ENCODE measurements at regions of chr5 and their contacts with region 1.

Region 1: GRCh38 chr5:134041570-134042411 is 37.0 kb upstream of the VDAC1 start:
- DNase-seq: no peak
- ATAC-seq: no peak
- H3K4me3 ChIP-seq: no peak overlapping the region
- H3K4me3 Mint-ChIP-seq: no peak overlapping the region
- H3K27ac ChIP-seq: no peak overlapping the region
- H3K27ac Mint-ChIP-seq: no peak overlapping the region
- H3K4me1 ChIP-seq: peaks cover 0 to 3% of the 10 kb centered on the region in 2 donors
- H3K4me1 Mint-ChIP-seq: peaks cover 1% of the 10 kb centered on the region
- H3K27me3 ChIP-seq: no peaks in the 10 kb centered on the region
- H3K27me3 Mint-ChIP-seq: no peaks in the 10 kb centered on the region
- CTCF ChIP-seq: no peak

Region 2: GRCh38 chr5:133111299-133111698 is 930.5 kb before region 1 on chr5:
- CTCF ChIA-PET with region 1: interaction called, 9 read pairs
- POLR2A ChIA-PET with region 1: no interaction called
- intact Hi-C with region 1: loop called (anchors 1 kb)
- DNase-seq: peak; percentile 88
- ATAC-seq: peak; percentile 60
- H3K4me3 ChIP-seq: no peak overlapping the region
- H3K4me3 Mint-ChIP-seq: no peak overlapping the region
- H3K27ac ChIP-seq: no peak overlapping the region
- H3K27ac Mint-ChIP-seq: peak overlapping the region; percentile 0
- H3K4me1 ChIP-seq: peaks cover 37 to 39% of the 10 kb centered on the region in 2 donors
- H3K4me1 Mint-ChIP-seq: peaks cover 59% of the 10 kb centered on the region
- H3K27me3 ChIP-seq: no peaks in the 10 kb centered on the region
- H3K27me3 Mint-ChIP-seq: no peaks in the 10 kb centered on the region
- CTCF ChIP-seq: peak; percentile 97

Region 3: DNA sequence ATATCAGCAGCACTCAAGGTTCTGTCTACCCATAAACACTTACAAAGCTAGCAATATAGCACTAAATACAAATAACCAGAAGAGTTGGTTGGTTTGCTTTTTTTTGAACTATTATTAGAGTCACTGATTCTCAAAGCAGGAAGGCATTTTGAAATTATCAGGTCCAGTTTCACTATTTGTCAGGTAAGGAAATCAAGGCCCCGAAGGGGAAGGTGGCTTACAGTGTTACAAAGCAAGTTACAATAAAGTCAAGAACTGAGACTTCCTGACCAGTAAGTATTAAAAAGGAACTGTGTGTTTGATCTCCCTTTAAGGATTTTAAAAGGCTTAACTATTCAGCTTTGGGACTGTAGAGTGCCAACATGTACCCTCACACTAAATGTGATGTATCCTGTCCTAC is 84.2 kb before region 1 on chr5:
- CTCF ChIA-PET with region 1: no interaction called
- POLR2A ChIA-PET with region 1: no interaction called
- intact Hi-C with region 1: no loop called
- DNase-seq: peak; percentile 65
- ATAC-seq: peak; percentile 59
- H3K4me3 ChIP-seq: peak overlapping the region in 1 of 5 experiments; percentile 38
- H3K4me3 Mint-ChIP-seq: peak overlapping the region; percentile 74
- H3K27ac ChIP-seq: peak overlapping the region; percentile 82
- H3K27ac Mint-ChIP-seq: peak overlapping the region; percentile 84
- H3K4me1 ChIP-seq: peaks cover 17 to 28% of the 10 kb centered on the region in 2 donors
- H3K4me1 Mint-ChIP-seq: peaks cover 37% of the 10 kb centered on the region
- H3K27me3 ChIP-seq: no peaks in the 10 kb centered on the region
- H3K27me3 Mint-ChIP-seq: no peaks in the 10 kb centered on the region
- CTCF ChIP-seq: no peak

Region 4: DNA sequence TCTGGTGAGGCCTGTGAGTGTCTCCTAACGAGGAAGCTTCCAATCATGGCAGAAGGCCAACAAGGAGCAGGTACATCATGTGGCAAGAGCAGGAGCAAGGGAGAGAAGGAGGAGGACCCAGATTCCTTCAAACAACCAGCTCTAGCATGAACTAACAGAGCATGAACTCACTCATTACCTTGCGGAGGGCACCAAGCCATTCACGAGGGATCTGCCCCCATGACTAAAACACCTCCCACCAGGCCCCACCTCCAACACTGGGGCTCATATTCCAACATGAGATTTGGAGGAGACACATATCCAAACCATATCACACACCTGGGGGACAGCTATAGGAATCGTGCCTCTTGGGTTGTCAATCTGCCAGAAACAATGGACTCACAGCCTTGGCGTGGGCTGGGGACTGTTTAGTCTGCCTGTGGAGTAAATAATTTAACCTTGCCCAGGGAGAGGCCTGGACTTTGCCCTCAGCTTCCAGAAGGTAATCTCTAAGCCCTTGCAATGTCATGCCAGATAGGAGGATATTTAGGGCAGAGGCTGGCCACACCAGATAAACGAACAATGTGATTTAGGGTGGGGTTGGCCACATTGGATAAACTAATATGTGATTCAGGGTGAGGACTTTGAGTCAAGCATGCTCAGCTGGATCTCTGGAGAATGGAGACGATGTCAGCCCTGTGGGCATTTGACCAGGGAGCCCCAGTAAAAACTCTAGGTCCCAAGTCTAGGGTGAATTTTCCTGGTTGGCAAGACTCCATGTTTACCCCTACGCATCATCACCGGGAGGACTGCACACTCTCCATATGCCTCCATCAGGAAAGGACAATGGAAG is 23.4 kb before region 1 on chr5:
- CTCF ChIA-PET with region 1: interaction called, 12 read pairs
- POLR2A ChIA-PET with region 1: no interaction called
- intact Hi-C with region 1: no loop called
- DNase-seq: no peak
- ATAC-seq: no peak
- H3K4me3 ChIP-seq: no peak overlapping the region
- H3K4me3 Mint-ChIP-seq: no peak overlapping the region
- H3K27ac ChIP-seq: no peak overlapping the region
- H3K27ac Mint-ChIP-seq: no peak overlapping the region
- H3K4me1 ChIP-seq: no peaks in the 10 kb centered on the region
- H3K4me1 Mint-ChIP-seq: no peaks in the 10 kb centered on the region
- H3K27me3 ChIP-seq: no peaks in the 10 kb centered on the region
- H3K27me3 Mint-ChIP-seq: peaks cover under 1% of the 10 kb centered on the region
- CTCF ChIP-seq: no peak

Region 5: GRCh38 chr5:134059758-134060495 is 18.1 kb after region 1 on chr5:
- CTCF ChIA-PET with region 1: interaction called, 12 read pairs
- POLR2A ChIA-PET with region 1: interaction called, 3 read pairs
- intact Hi-C with region 1: no loop called
- DNase-seq: no peak
- ATAC-seq: no peak
- H3K4me3 ChIP-seq: no peak overlapping the region
- H3K4me3 Mint-ChIP-seq: no peak overlapping the region
- H3K27ac ChIP-seq: no peak overlapping the region
- H3K27ac Mint-ChIP-seq: no peak overlapping the region
- H3K4me1 ChIP-seq: no peaks in the 10 kb centered on the region
- H3K4me1 Mint-ChIP-seq: no peaks in the 10 kb centered on the region
- H3K27me3 ChIP-seq: no peaks in the 10 kb centered on the region
- H3K27me3 Mint-ChIP-seq: no peaks in the 10 kb centered on the region
- CTCF ChIP-seq: no peak

Region 6: GRCh38 chr5:134113902-134114875 is 72.4 kb after region 1 on chr5 and contains the start of gene TCF7:
- CTCF ChIA-PET with region 1: interaction called, 27 read pairs
- POLR2A ChIA-PET with region 1: no interaction called
- intact Hi-C with region 1: no loop called
- DNase-seq: peak; percentile 86
- ATAC-seq: peak; percentile 89
- H3K4me3 ChIP-seq: peak within 1 kb of the TSS; percentile 64 to 84 (median 82)
- H3K4me3 Mint-ChIP-seq: peak within 1 kb of the TSS; percentile 90
- H3K27ac ChIP-seq: peak within 1 kb of the TSS in 1 of 2 donors; percentile 36
- H3K27ac Mint-ChIP-seq: peak within 1 kb of the TSS; percentile 78
- H3K4me1 ChIP-seq: peaks cover 13 to 32% of the 10 kb centered on the region in 2 donors
- H3K4me1 Mint-ChIP-seq: peaks cover 19% of the 10 kb centered on the region
- H3K27me3 ChIP-seq: peaks cover 0 to 38% (median 16%) of the 10 kb centered on the region in 4 experiments
- H3K27me3 Mint-ChIP-seq: peaks cover 14% of the 10 kb centered on the region
- CTCF ChIP-seq: no peak
- total RNA-seq, gene TCF7: 58.8 and 61.1 TPM in 2 replicates

Region 7: GRCh38 chr5:134145779-134146581 is 104.2 kb after region 1 on chr5:
- CTCF ChIA-PET with region 1: interaction called, 644 read pairs
- POLR2A ChIA-PET with region 1: interaction called, 3 read pairs
- intact Hi-C with region 1: loop called (anchors 1 kb)
- DNase-seq: peak; percentile 85
- ATAC-seq: peak; percentile 89
- H3K4me3 ChIP-seq: no peak overlapping the region
- H3K4me3 Mint-ChIP-seq: no peak overlapping the region
- H3K27ac ChIP-seq: no peak overlapping the region
- H3K27ac Mint-ChIP-seq: peak overlapping the region; percentile 11
- H3K4me1 ChIP-seq: no peaks in the 10 kb centered on the region
- H3K4me1 Mint-ChIP-seq: peaks cover 7% of the 10 kb centered on the region
- H3K27me3 ChIP-seq: no peaks in the 10 kb centered on the region
- H3K27me3 Mint-ChIP-seq: no peaks in the 10 kb centered on the region
- CTCF ChIP-seq: peak; percentile 96

Region 8: GRCh38 chr5:134289509-134290113 is 247.8 kb after region 1 on chr5:
- CTCF ChIA-PET with region 1: interaction called, 21 read pairs
- POLR2A ChIA-PET with region 1: no interaction called
- intact Hi-C with region 1: no loop called
- DNase-seq: peak; percentile 72
- ATAC-seq: peak; percentile 72
- H3K4me3 ChIP-seq: no peak overlapping the region
- H3K4me3 Mint-ChIP-seq: no peak overlapping the region
- H3K27ac ChIP-seq: no peak overlapping the region
- H3K27ac Mint-ChIP-seq: no peak overlapping the region
- H3K4me1 ChIP-seq: no peaks in the 10 kb centered on the region
- H3K4me1 Mint-ChIP-seq: no peaks in the 10 kb centered on the region
- H3K27me3 ChIP-seq: peaks cover 0 to 5% (median 0%) of the 10 kb centered on the region in 4 experiments
- H3K27me3 Mint-ChIP-seq: peaks cover 28% of the 10 kb centered on the region
- CTCF ChIP-seq: peak; percentile 63